ENCODE measurements at regions of chr18 and their contacts with region 1.

Region 1: GRCh38 chr18:12883684-12884405 is at the start of gene PTPN2:
- DNase-seq: peak; percentile 93
- H3K4me3 Mint-ChIP-seq: peak within 1 kb of the TSS; percentile 92
- H3K27ac Mint-ChIP-seq: peak within 1 kb of the TSS; percentile 91
- H3K4me1 Mint-ChIP-seq: peaks cover 60% of the 10 kb centered on the region
- H3K27me3 Mint-ChIP-seq: no peaks in the 10 kb centered on the region
- total RNA-seq, gene PTPN2: 82.9 to 90.8 TPM

Region 2: DNA sequence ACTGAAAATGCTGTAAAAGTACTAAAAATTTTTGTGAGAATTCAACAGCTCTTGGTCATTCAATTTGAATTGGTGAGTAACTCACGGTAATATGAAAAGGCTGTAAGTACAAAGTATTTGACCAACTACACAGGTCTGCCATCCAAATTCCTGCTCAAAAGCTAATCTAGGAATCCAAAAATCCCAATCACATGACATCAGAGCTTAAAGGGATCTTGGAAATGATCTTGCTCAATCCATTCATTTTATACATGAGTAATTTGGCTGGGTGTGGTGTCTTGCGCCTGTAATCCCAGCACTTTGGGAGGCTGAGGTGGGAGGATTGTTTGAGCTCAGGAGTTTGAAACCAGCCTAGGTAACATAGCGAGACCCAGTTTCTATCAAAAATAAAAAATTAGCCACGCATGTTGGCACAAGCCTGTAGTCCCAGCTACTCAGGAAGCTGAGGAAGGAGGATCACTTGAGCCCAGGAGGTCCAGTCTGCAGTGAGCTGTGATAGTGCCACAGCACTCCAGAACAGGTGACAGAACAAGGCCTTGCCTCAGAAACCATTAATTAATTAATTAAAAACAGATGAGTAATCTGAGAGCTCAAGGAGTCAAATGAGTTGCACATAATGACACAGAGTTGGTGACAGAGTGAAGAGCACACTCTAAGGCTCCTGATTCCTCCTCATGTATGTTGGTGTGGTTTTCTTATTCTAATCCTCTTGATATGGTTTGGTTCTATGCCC is 245.8 kb before region 1 on chr18:
- CTCF ChIA-PET with region 1: no interaction called
- POLR2A ChIA-PET with region 1: no interaction called
- DNase-seq: no peak
- H3K4me3 Mint-ChIP-seq: no peak overlapping the region
- H3K27ac Mint-ChIP-seq: no peak overlapping the region
- H3K4me1 Mint-ChIP-seq: peaks cover 8% of the 10 kb centered on the region
- H3K27me3 Mint-ChIP-seq: no peaks in the 10 kb centered on the region

Region 3: DNA sequence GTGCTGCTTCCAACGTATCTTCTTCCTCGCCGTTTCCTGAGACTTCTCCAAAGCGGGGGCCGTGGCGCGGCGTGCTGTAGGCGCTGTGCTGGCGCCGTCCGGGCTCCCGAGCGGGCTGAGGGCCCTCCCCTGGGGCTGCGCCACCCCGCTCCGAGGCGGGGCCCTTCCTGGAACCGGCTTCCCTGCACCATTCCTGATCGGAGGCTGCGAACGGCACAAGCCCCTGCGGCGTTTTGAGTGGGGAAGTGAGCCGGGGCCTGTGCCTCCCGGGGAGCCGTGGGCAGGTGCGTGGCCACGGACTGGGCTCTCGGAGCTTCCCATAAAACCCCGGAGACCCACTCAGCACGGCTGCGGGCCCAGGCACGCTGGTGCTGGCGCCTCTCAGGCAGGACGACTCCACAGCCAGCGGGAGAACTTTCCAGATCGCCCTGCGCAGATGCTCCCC is 106.3 kb before region 1 on chr18:
- CTCF ChIA-PET with region 1: interaction called, 8 read pairs
- POLR2A ChIA-PET with region 1: interaction called, 41 read pairs
- DNase-seq: no peak
- H3K4me3 Mint-ChIP-seq: peak overlapping the region; percentile 47
- H3K27ac Mint-ChIP-seq: no peak overlapping the region
- H3K4me1 Mint-ChIP-seq: peaks cover 9% of the 10 kb centered on the region
- H3K27me3 Mint-ChIP-seq: no peaks in the 10 kb centered on the region

Region 4: GRCh38 chr18:12838178-12838634 is 45.6 kb before region 1 on chr18:
- CTCF ChIA-PET with region 1: interaction called, 10 read pairs
- POLR2A ChIA-PET with region 1: interaction called, 96 read pairs
- DNase-seq: peak; percentile 37
- H3K4me3 Mint-ChIP-seq: peak overlapping the region; percentile 78
- H3K27ac Mint-ChIP-seq: peak overlapping the region; percentile 100
- H3K4me1 Mint-ChIP-seq: peaks cover 66% of the 10 kb centered on the region
- H3K27me3 Mint-ChIP-seq: no peaks in the 10 kb centered on the region

Region 5: DNA sequence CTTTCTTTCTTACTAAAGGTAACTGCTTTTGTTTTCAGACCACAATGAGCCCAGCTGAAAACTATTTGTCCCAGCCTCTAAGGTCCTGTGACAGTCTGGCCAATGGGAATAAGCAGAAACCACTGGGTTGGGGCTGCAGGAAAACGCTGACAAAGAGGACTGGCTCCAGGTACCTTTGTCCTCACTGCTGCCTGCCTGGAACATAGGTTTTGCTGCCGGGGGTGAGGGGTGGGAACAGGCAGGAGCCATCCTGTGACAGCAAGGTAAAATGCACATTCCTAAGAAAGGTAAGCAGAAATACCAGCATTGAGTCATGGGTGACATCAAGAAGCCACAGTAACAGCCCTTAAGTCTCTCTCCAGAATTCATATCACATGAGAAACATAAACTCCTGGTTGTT is 21.4 kb before region 1 on chr18:
- CTCF ChIA-PET with region 1: interaction called, 7 read pairs
- POLR2A ChIA-PET with region 1: interaction called, 83 read pairs
- DNase-seq: no peak
- H3K4me3 Mint-ChIP-seq: no peak overlapping the region
- H3K27ac Mint-ChIP-seq: no peak overlapping the region
- H3K4me1 Mint-ChIP-seq: peaks cover 56% of the 10 kb centered on the region
- H3K27me3 Mint-ChIP-seq: no peaks in the 10 kb centered on the region